ENCODE measurements at regions of chr2 and their contacts with region 1.

Region 1: DNA sequence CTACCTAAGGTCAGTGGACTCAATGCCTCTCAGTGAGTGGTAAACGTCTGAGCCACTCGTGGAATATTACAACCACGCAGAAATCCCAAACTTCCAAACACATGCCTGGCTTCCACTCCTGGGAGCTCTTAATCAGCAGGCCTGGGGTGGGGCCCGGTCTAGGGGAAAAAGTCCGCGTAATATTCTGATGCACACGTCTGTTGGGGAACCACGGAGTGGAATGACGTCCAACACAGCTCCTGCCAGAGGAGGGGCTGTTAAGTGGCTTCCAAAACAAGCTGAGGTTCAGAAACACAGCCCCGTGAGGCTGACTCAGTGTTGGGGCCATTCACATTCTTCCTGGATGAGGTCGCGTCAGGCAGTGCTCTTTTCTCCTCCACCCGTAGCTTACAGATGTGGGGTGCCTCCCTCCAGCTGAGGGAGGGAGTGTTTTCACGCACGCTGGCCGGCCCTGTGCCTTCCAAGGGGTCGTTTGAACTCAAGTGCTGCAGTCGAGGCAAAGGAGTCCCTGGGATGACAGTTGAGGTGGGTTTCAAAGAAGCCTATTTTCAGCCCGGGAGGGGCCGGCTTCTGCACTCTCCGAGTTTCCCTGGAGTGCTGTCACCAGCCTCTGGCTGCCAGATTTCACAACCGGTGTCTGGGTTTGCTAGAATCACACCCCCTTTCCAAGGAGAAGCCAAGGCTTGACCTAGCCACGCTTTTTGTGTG is 73.1 kb downstream of the ACKR3 start:
- DNase-seq: peak; percentile 95 to 96
- ATAC-seq: peak; percentile 95
- H3K4me3 ChIP-seq: no peak overlapping the region
- H3K27ac ChIP-seq: peak overlapping the region; percentile 34 to 96
- H3K4me1 ChIP-seq: no peaks in the 10 kb centered on the region
- H3K27me3 ChIP-seq: no peaks in the 10 kb centered on the region

Region 2: DNA sequence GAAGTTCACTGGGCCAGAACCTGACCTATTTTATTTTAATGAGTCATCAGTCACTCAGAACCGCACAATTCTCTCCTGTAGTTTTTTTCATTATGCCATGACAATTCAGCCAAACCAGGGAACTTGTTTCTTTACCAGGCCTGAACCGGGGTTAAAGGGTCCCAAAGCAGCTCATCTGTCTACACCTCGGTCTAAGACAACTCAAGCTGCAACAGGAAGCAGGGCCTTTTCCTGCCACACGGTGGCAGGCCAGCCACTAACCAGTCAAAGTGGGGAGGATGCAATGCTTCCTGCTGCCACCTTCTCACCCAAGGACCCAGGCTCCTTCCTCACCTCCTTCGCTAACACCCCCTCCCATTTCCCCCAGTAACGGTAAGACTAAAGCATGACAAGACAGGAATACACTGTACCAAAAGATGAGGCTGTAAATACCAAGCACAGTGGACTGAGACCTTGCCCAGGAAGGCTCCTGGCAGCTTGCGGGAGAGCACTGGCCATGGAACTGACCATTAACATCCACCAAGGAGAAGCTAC is 129.8 kb before region 1 on chr2:
- intact Hi-C with region 1: no loop called
- DNase-seq: peak; percentile 71 to 85
- ATAC-seq: peak; percentile 81
- H3K4me3 ChIP-seq: no peak overlapping the region
- H3K27ac ChIP-seq: no peak overlapping the region
- H3K4me1 ChIP-seq: peaks cover 0 to 1% of the 10 kb centered on the region in 2 donors
- H3K27me3 ChIP-seq: no peaks in the 10 kb centered on the region

Region 3: DNA sequence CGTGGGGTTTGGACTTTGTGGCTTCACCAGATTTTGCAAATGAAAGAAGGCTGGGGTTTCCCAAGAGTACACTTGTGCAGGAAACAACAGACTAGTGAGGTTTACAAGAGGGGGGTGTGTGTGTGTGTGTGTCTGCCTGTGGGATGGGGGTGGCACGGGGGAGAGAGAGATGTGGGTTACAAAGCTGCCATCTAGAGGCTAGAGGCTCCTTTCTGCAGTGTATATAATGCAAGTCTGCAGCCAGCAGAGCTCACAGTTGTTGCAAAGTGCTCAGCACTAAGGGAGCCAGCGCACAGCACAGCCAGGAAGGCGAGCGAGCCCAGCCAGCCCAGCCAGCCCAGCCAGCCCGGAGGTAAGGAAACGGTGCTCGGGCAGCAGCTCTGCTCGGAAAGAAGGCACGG is 73.2 kb before region 1 on chr2 and contains the start of gene ACKR3:
- intact Hi-C with region 1: loop called (anchors 1 to 5 kb)
- DNase-seq: peak; percentile 83 to 91
- ATAC-seq: peak; percentile 88
- H3K4me3 ChIP-seq: peak within 1 kb of the TSS; percentile 67 to 80
- H3K27ac ChIP-seq: peak within 1 kb of the TSS; percentile 80 to 93
- H3K4me1 ChIP-seq: peaks cover 0 to 11% of the 10 kb centered on the region in 2 donors
- H3K27me3 ChIP-seq: no peaks in the 10 kb centered on the region
- total RNA-seq, gene ACKR3: 113 to 116 TPM

Region 4: GRCh38 chr2:236682651-236683415 is 40.1 kb after region 1 on chr2:
- intact Hi-C with region 1: no loop called
- DNase-seq: peak in 1 of 2 donors; percentile 33
- ATAC-seq: no peak
- H3K4me3 ChIP-seq: no peak overlapping the region
- H3K27ac ChIP-seq: no peak overlapping the region
- H3K4me1 ChIP-seq: no peaks in the 10 kb centered on the region
- H3K27me3 ChIP-seq: no peaks in the 10 kb centered on the region

Region 5: DNA sequence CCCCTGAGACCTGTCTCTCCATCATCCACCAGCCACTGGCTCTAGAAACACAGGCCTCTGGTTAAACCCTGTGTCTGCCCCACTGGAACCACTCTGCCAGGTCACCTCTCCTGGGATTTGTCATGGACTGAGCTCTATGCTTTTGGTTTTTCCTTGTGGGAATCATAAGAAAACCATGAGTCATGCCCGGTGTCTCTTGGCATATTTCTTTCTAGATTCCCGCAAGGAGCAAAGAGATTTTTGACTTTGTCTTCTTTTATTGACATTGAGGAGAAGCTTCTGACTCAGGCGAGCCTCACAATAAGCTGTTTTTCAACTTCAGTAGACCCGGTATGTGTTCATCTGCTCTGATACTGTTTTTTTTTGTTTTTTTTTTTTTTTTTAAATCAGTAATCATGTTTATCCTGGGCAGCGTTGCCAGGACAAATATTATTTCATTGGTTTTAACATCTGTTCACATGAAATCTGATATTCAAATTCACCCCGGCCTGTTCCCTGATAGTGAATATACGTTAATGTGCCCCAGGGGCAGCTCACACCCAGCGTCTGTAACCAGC is 134.0 kb after region 1 on chr2:
- intact Hi-C with region 1: loop called in 1 of 2 experiments (anchors 5 kb)
- DNase-seq: peak; percentile 84
- ATAC-seq: peak; percentile 73
- H3K4me3 ChIP-seq: no peak overlapping the region
- H3K27ac ChIP-seq: peak overlapping the region in 1 of 2 donors; percentile 33
- H3K4me1 ChIP-seq: no peaks in the 10 kb centered on the region
- H3K27me3 ChIP-seq: no peaks in the 10 kb centered on the region

Region 6: GRCh38 chr2:236794174-236794957 is 151.6 kb after region 1 on chr2:
- intact Hi-C with region 1: loop called (anchors 5 kb)
- DNase-seq: no peak
- ATAC-seq: no peak
- H3K4me3 ChIP-seq: no peak overlapping the region
- H3K27ac ChIP-seq: no peak overlapping the region
- H3K4me1 ChIP-seq: no peaks in the 10 kb centered on the region
- H3K27me3 ChIP-seq: no peaks in the 10 kb centered on the region

Region 7: GRCh38 chr2:236805800-236806531 is 163.2 kb after region 1 on chr2:
- intact Hi-C with region 1: no loop called
- DNase-seq: peak in 1 of 2 donors; percentile 65
- ATAC-seq: no peak
- H3K4me3 ChIP-seq: no peak overlapping the region
- H3K27ac ChIP-seq: no peak overlapping the region
- H3K4me1 ChIP-seq: no peaks in the 10 kb centered on the region
- H3K27me3 ChIP-seq: no peaks in the 10 kb centered on the region

Region 8: DNA sequence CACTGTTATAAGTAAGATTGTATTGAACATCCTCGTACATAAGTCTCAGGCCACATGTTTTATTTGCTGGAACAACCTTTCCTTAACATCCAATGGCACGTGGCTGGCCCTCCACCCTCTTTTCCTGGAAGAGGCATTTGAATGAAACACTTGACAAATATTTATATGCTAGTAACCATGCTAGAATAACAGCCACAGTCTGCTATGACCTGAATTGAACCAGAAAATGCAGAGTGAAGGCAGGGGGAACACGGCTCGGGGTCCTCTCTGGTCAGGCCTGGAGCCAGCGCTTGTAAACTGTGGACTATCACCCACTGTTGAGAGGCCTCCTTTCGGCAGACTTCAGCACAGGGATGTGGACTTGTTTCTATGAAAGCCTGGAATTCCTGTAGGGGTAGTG is 244.8 kb after region 1 on chr2:
- intact Hi-C with region 1: loop called in 1 of 2 experiments (anchors 10 kb)
- DNase-seq: peak; percentile 79 to 86
- ATAC-seq: peak; percentile 23
- H3K4me3 ChIP-seq: no peak overlapping the region
- H3K27ac ChIP-seq: peak overlapping the region; percentile 74 to 92
- H3K4me1 ChIP-seq: peaks cover 5 to 6% of the 10 kb centered on the region in 2 donors
- H3K27me3 ChIP-seq: no peaks in the 10 kb centered on the region